Activated CD4-positive, alpha-beta T cell treated with anti-CD3 and anti-CD28 coated beads, Interleukin-2, amount 10 ng/mL, durations not matched to agents 24 days and 14 days (primary cell): ENCODE measurements at regions of chr14 and their contacts with region 1.

Region 1: DNA sequence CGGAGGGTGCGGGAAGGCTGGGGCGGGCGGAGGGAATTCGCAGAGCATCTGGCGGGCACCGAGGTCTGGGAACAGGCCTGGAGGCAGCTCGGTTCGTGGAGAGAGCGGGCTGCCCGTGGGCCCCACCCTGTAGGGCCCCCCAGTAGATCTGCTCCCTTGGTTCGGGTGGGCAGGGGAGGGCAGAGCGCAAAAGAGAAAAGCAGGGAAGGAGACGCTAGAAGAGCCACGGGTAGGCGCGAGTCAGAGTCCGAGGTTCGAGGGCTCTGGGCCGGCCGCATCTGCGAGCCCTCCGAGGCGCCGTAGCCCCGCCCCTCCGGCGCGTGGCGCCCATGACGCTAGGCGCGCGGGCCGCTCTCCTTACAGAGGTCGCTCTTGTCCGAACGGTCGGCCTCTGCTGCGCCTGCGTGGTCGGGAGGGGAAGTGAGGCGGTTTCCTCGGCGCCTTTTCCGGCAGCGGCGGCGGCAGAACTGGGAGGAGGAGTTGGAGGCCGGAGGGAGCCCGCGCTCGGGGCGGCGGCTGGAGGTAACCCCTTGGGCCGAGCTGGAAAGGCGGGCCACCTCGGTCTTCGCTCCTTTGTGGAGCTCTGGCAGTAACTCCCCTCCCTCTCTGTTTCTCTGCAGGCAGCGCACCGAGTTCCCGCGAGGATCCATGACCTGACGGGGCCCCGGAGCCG is at the start of gene ARF6:
- DNase-seq: peak; percentile 99
- H3K4me3 Mint-ChIP-seq: peak within 1 kb of the TSS; percentile 96
- H3K27ac Mint-ChIP-seq: peak within 1 kb of the TSS; percentile 100
- H3K4me1 Mint-ChIP-seq: peaks cover 21% of the 10 kb centered on the region
- H3K27me3 Mint-ChIP-seq: no peaks in the 10 kb centered on the region
- total RNA-seq, gene ARF6: 154 and 160 TPM in 2 replicates

Region 2: GRCh38 chr14:49862089-49862673 is 30.6 kb before region 1 on chr14:
- intact Hi-C with region 1: loop called (anchors 1 kb)
- DNase-seq: peak; percentile 95
- H3K4me3 Mint-ChIP-seq: no peak overlapping the region
- H3K27ac Mint-ChIP-seq: no peak overlapping the region
- H3K4me1 Mint-ChIP-seq: peaks cover 18% of the 10 kb centered on the region
- H3K27me3 Mint-ChIP-seq: peaks cover 4% of the 10 kb centered on the region

Region 3: GRCh38 chr14:49867831-49868723 is 24.7 kb before region 1 on chr14:
- intact Hi-C with region 1: loop called (anchors 1 kb)
- DNase-seq: peak; percentile 98
- H3K4me3 Mint-ChIP-seq: peak overlapping the region; percentile 99
- H3K27ac Mint-ChIP-seq: peak overlapping the region; percentile 97
- H3K4me1 Mint-ChIP-seq: peaks cover 23% of the 10 kb centered on the region
- H3K27me3 Mint-ChIP-seq: no peaks in the 10 kb centered on the region

Region 4: GRCh38 chr14:49982501-49982951 is 89.8 kb after region 1 on chr14:
- intact Hi-C with region 1: loop called (anchors 1 kb)
- DNase-seq: no peak
- H3K4me3 Mint-ChIP-seq: no peak overlapping the region
- H3K27ac Mint-ChIP-seq: peak overlapping the region; percentile 78
- H3K4me1 Mint-ChIP-seq: peaks cover 59% of the 10 kb centered on the region
- H3K27me3 Mint-ChIP-seq: no peaks in the 10 kb centered on the region

Region 5: GRCh38 chr14:50109342-50109741 is 216.6 kb after region 1 on chr14:
- intact Hi-C with region 1: loop called (anchors 1 kb)
- DNase-seq: no peak
- H3K4me3 Mint-ChIP-seq: no peak overlapping the region
- H3K27ac Mint-ChIP-seq: no peak overlapping the region
- H3K4me1 Mint-ChIP-seq: peaks cover 20% of the 10 kb centered on the region
- H3K27me3 Mint-ChIP-seq: no peaks in the 10 kb centered on the region

Region 6: GRCh38 chr14:51865953-51866747 is 1973.4 kb after region 1 on chr14:
- intact Hi-C with region 1: loop called (anchors 5 kb)
- DNase-seq: peak; percentile 78
- H3K4me3 Mint-ChIP-seq: no peak overlapping the region
- H3K27ac Mint-ChIP-seq: no peak overlapping the region
- H3K4me1 Mint-ChIP-seq: peaks cover 42% of the 10 kb centered on the region
- H3K27me3 Mint-ChIP-seq: no peaks in the 10 kb centered on the region